Cardiac septum (tissue), 1 donor: ENCODE measurements at regions of chr1 and their contacts with region 1.

Region 1: DNA sequence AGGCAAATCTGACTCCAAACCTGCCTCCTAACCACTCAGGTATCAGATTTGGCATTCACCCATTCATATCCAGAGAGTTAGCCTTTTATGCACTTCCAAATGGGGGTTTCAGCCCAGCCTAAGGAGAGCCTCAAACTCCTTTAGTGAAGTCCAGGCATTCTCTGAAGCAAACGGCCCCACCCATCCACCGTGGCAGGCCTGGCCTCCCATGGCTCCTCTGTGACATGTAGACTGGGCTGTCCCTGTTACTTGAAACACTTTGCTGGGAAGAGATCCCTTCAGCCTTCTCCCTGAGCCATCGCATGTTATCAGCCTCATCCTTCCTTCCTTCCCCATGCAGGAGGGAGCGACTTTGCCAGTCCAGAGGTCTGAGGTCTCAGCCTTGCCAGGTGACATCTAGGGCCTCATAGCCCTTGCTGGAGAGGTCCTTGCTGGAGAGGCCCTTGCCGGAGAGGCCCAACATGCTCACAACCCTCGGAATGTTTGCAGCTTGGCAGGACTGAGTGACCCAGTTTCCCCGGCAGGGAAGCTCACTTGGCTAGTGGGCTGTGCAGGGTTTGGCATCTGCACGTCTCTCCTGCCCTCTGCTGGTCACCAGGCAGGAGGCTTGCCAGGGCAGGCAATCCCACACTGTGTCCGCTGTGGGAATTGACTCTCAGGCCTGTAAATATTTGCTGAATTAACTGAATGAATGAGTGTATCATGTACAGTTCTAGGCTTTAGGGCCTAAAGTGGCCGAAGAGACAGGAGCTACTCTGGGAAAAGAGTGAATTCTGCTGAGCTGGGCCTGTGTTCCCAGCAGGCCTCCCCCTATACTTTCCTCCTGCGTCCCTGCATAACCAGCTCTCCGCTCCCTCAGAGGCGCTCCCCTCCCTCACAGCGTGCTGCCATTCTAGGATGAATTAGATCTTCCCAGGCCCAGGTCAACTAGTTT is 26.7 kb upstream of the RBM15 start:
- DNase-seq: peak; percentile 91

Region 2: DNA sequence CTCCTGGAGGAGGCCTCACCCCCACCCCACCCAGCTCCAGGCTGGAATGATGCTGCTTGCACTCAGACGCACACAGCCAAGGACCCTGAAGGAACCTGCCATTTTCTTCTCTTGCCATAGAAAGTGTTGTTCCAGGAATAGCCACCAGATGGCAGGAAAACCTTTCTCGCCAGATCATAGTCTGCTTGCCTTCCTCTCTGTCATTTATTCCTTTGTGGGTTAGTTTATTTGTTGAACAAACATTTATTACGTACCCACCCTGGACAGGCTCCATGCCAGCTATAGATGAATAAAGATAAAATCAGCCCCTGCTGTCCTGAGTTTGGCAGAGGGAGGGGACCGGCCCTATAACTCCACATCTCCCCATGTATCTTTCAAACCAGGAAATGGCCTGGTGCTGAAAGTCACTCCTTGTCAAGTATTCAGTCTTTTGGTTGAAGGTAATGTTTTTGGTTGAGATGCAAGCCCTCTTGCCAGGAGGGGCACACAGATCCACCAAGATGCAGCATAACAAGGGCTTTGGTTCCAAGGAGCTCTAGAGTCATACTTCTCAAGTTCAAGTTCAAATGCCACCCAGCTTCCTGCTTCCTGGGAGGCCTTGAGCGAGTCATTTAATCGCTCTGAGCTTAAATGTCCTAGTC is 109.3 kb before region 1 on chr1:
- intact Hi-C with region 1: loop called (anchors 1 kb)
- DNase-seq: no peak

Region 3: DNA sequence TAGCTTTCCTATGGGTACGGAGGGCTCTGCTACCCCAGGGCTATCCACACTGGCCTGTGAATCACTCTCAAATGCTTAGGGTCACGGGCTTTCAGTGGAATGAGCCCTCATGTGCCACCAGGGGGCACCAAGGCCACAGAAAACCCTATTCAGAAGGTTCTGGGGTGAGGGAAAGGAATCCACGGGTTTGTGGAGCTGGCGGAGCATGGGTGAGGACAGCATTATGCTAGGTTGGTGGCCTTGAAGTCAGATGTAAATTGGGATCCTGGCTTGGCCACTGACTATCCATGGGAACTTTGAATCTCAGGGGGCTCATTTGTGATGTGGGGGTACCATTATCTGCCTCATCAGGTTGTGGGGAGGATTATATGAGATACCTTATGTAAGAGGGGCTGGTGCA is 100.1 kb after region 1 on chr1:
- intact Hi-C with region 1: no loop called
- DNase-seq: no peak

Region 4: GRCh38 chr1:110455151-110455550 is 142.7 kb after region 1 on chr1:
- intact Hi-C with region 1: loop called (anchors 5 kb)
- DNase-seq: no peak

Region 5: GRCh38 chr1:110508038-110508940 is 195.8 kb after region 1 on chr1:
- intact Hi-C with region 1: no loop called
- DNase-seq: no peak